Endothelial cell of umbilical vein (primary cell): ENCODE measurements at regions of chr9 and their contacts with region 1.

Region 1: DNA sequence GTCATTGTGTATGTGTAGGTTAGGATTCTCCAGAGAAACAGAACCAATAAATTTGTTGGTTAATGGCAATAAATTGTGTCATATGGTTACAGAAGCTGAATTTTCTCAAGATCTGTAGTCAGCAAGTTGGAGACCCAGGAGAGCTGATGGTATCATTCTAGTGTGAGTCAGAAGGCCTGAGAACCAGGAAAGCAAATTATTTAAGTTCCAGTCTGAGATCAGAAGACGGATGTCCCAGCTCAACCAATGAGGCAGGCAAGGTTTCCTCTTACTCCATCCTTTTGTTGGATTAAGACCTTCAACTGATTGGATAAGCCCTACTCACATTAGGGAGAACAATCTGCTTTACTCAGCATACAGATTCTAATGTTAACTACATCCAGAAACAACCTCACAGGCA is 656.3 kb downstream of the ANXA1 start:
- DNase-seq: no peak
- H3K4me3 ChIP-seq: no peak overlapping the region
- H3K27ac ChIP-seq: no peak overlapping the region
- H3K4me1 ChIP-seq: no peaks in the 10 kb centered on the region
- H3K27me3 ChIP-seq: no peaks in the 10 kb centered on the region
- CTCF ChIP-seq: no peak
- POLR2A ChIP-seq: no peak

Region 2: GRCh38 chr9:73824671-73825070 is 16.7 kb after region 1 on chr9:
- CTCF ChIA-PET with region 1: no interaction called
- POLR2A ChIA-PET with region 1: no interaction called
- dilution Hi-C with region 1: no loop called
- intact Hi-C with region 1: no loop called
- DNase-seq: no peak
- H3K4me3 ChIP-seq: no peak overlapping the region
- H3K27ac ChIP-seq: no peak overlapping the region
- H3K4me1 ChIP-seq: no peaks in the 10 kb centered on the region
- H3K27me3 ChIP-seq: no peaks in the 10 kb centered on the region
- CTCF ChIP-seq: no peak
- POLR2A ChIP-seq: no peak

Region 3: GRCh38 chr9:73839471-73839870 is 31.5 kb after region 1 on chr9:
- CTCF ChIA-PET with region 1: no interaction called
- POLR2A ChIA-PET with region 1: no interaction called
- dilution Hi-C with region 1: no loop called
- intact Hi-C with region 1: no loop called
- DNase-seq: no peak
- H3K4me3 ChIP-seq: no peak overlapping the region
- H3K27ac ChIP-seq: no peak overlapping the region
- H3K4me1 ChIP-seq: no peaks in the 10 kb centered on the region
- H3K27me3 ChIP-seq: no peaks in the 10 kb centered on the region
- CTCF ChIP-seq: no peak
- POLR2A ChIP-seq: no peak

Region 4: DNA sequence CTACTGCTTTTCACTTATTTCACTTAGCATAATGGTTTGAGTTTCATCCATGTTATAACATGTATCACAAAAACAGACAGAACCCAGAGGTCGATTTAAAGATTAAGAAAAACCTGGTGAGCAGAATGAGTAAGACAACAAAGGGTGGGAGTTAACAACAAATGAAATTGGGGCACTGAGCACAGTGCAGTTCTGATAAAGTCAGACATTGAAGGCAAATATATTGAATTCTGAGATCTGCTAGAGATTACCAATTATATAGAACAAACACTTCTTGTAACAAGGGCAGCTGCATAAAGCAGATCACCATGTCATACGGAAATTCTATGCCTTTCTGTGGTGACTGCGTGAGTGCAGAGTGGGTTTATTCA is 171.9 kb after region 1 on chr9:
- CTCF ChIA-PET with region 1: no interaction called
- POLR2A ChIA-PET with region 1: no interaction called
- dilution Hi-C with region 1: no loop called
- intact Hi-C with region 1: no loop called
- DNase-seq: no peak
- H3K4me3 ChIP-seq: no peak overlapping the region
- H3K27ac ChIP-seq: no peak overlapping the region
- H3K4me1 ChIP-seq: no peaks in the 10 kb centered on the region
- H3K27me3 ChIP-seq: no peaks in the 10 kb centered on the region
- CTCF ChIP-seq: no peak
- POLR2A ChIP-seq: no peak

Region 5: GRCh38 chr9:75461183-75461582 is 1653.2 kb after region 1 on chr9:
- CTCF ChIA-PET with region 1: no interaction called
- POLR2A ChIA-PET with region 1: no interaction called
- dilution Hi-C with region 1: no loop called
- intact Hi-C with region 1: loop called (anchors 5 kb)
- DNase-seq: no peak
- H3K4me3 ChIP-seq: no peak overlapping the region
- H3K27ac ChIP-seq: no peak overlapping the region
- H3K4me1 ChIP-seq: no peaks in the 10 kb centered on the region
- H3K27me3 ChIP-seq: no peaks in the 10 kb centered on the region
- CTCF ChIP-seq: no peak
- POLR2A ChIP-seq: no peak